ENCODE measurements at regions of chr3 and their contacts with region 1.

Region 1: GRCh38 chr3:52339612-52340011 is 23.5 kb downstream of the DNAH1 start:
- DNase-seq: peak; percentile 42 to 81
- ATAC-seq: peak; percentile 43 to 54; a peak in 3 of 6 replicates
- H3K4me3 ChIP-seq: no peak overlapping the region
- H3K27ac ChIP-seq: no peak overlapping the region
- H3K4me1 ChIP-seq: no peaks in the 10 kb centered on the region
- CTCF ChIP-seq: peak; percentile 81
- EP300 ChIP-seq: no peak
- POLR2A ChIP-seq: no peak
- RAD21 ChIP-seq: peak; percentile 87 to 89

Region 2: GRCh38 chr3:51887620-51888019 is 452.0 kb before region 1 on chr3:
- CTCF ChIA-PET with region 1: no interaction called
- POLR2A ChIA-PET with region 1: no interaction called
- DNase-seq: no peak
- ATAC-seq: no peak
- H3K4me3 ChIP-seq: no peak overlapping the region
- H3K27ac ChIP-seq: no peak overlapping the region
- H3K4me1 ChIP-seq: no peaks in the 10 kb centered on the region
- CTCF ChIP-seq: no peak
- EP300 ChIP-seq: no peak
- POLR2A ChIP-seq: no peak
- RAD21 ChIP-seq: no peak

Region 3: DNA sequence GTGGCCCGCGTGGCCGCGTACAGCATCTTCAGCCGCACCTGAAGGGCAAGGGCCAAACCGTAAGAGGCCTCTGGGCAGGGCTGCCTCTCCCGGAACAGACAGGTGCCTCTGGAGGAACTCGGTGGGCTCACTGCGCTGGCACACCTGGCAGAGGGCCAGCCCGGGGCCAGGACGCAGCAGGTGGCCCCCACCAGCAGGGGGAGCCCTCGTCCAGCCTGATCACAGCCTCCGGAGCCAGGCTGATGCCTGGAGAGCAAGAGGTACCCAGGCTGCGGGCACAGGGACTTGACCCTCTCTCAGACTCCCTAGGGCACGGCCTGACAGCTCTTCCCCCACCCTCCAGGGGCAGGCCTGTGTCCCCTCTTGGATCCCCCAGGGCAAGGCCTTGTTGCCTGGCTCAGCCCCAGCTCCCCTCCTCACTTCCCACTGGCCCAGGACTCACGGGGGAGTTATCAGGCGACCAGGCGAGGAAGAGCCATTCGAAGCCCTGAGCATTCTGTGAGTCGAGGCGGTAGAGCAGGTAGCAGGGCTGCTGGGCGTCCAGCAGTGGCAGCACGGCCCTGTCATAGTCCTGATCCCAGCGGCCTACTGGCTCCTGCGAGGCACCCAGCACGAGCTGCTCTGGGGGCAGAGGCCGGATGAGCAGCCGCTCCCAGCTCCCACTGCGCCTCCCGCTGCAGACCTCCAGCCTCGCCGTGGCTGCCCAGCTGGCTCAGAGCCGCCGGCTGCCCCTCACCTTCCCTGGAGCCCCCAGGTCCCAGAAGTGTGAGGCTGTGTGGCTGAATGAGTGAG is 107.9 kb before region 1 on chr3:
- CTCF ChIA-PET with region 1: interaction called, 54 read pairs
- POLR2A ChIA-PET with region 1: no interaction called
- DNase-seq: peak; percentile 40 to 62
- ATAC-seq: peak; percentile 61 to 85; a peak in 5 of 6 replicates
- H3K4me3 ChIP-seq: no peak overlapping the region
- H3K27ac ChIP-seq: no peak overlapping the region
- H3K4me1 ChIP-seq: peaks cover 6% of the 10 kb centered on the region
- CTCF ChIP-seq: peak; percentile 70
- EP300 ChIP-seq: no peak
- POLR2A ChIP-seq: no peak
- RAD21 ChIP-seq: peak; percentile 59 to 63; a peak in 4 of 5 replicates

Region 4: GRCh38 chr3:52291508-52292181 is 48.0 kb before region 1 on chr3:
- CTCF ChIA-PET with region 1: interaction called, 311 read pairs
- POLR2A ChIA-PET with region 1: interaction called, 3 read pairs
- DNase-seq: no peak
- ATAC-seq: peak in 1 of 2 experiments; percentile 39; a peak in 3 of 6 replicates
- H3K4me3 ChIP-seq: no peak overlapping the region
- H3K27ac ChIP-seq: no peak overlapping the region
- H3K4me1 ChIP-seq: peaks cover 20% of the 10 kb centered on the region
- CTCF ChIP-seq: peak; percentile 63
- EP300 ChIP-seq: no peak
- POLR2A ChIP-seq: no peak
- RAD21 ChIP-seq: peak; percentile 79 to 82

Region 5: DNA sequence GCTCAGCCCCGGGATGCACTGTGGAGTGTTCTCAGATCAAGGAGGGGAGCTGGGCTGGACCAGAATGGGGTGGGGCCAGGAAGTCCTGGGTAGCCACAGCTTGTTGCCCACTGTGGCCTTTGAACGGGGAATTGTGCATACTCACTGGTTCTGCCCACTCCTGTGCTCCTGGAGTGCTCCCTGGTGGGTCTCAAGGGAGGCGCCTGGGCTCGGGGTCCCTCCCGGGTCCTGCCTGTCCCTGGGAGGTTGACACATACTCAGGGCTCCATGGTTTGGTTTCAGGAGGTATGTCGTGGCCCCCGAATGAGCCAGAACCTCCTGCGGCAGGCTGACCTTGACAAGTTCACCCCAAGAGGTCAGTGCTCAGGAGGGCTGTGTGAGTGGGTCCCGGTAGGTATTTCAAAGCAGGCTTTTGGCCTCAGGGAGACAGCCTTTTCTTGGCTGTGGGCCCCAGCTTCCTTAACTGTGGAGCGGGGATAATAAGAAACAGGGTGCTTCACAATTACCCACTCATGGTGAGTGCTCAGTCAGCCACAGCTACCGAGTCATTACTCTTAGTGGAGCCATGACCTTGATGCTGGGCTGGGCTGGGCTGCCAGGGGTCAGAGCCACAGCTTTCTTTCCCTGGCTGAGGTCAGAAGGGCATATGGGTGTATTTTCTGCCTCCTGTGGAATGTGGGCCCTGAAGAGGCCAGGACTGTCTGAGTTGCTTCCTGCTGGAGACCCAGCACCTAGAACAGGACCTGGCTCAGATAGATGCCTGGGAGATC is 15.9 kb before region 1 on chr3:
- CTCF ChIA-PET with region 1: interaction called, 56 read pairs
- POLR2A ChIA-PET with region 1: no interaction called
- DNase-seq: no peak
- ATAC-seq: peak in 1 of 2 experiments; percentile 42; a peak in 2 of 6 replicates
- H3K4me3 ChIP-seq: no peak overlapping the region
- H3K27ac ChIP-seq: peak overlapping the region in 1 of 2 experiments; percentile 18; a peak in 1 of 6 replicates
- H3K4me1 ChIP-seq: no peaks in the 10 kb centered on the region
- CTCF ChIP-seq: no peak
- EP300 ChIP-seq: no peak
- POLR2A ChIP-seq: no peak
- RAD21 ChIP-seq: no peak

Region 6: DNA sequence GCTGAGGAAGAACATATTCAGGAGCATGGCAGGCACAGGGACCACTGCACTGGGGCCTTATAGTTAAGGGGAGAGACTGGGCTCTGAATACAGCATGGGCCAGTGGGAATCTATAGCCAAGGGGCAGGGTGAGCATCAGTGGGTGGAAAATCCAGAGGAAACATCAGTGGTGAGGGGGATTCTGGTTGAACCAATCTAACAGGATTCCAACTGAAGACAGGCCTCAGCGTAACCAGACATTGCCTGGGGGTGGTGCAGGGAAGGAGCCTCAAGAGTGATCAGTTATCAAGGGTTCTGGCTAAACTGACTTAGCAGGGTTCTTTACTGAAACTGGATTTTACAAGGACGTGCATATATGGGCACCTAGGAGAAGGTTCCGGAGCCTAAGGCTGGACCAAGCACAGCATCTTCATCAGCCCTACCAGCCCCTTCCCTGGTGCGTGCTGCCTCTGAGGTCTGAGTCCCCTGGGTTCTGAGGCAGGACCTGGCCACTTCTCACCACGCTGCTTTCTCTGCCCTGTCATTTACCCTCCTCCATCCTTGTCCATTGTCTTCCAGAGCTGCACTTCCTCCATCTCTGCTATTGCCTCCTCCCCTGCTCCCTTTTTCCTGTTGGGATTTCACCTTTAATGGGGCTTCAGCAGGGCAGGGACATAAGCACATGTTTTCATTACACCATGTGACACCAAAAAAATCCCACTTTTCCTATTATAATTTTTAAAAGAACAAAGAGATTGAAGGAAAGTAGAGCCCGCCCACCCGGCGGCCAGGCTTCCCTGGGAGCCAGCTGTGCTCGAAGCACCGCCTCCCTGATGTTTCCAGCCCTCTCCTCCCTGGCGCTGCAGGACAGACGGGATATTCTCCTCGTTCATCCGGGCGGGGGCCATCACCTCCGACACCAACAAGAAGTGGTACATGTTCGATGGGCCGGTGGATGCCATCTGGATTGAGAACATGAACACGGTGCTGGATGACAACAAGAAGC is 28.6 kb after region 1 on chr3:
- CTCF ChIA-PET with region 1: interaction called, 10 read pairs
- POLR2A ChIA-PET with region 1: no interaction called
- DNase-seq: no peak
- ATAC-seq: no peak
- H3K4me3 ChIP-seq: no peak overlapping the region
- H3K27ac ChIP-seq: no peak overlapping the region
- H3K4me1 ChIP-seq: no peaks in the 10 kb centered on the region
- CTCF ChIP-seq: no peak
- EP300 ChIP-seq: no peak
- POLR2A ChIP-seq: no peak
- RAD21 ChIP-seq: no peak

Region 7: DNA sequence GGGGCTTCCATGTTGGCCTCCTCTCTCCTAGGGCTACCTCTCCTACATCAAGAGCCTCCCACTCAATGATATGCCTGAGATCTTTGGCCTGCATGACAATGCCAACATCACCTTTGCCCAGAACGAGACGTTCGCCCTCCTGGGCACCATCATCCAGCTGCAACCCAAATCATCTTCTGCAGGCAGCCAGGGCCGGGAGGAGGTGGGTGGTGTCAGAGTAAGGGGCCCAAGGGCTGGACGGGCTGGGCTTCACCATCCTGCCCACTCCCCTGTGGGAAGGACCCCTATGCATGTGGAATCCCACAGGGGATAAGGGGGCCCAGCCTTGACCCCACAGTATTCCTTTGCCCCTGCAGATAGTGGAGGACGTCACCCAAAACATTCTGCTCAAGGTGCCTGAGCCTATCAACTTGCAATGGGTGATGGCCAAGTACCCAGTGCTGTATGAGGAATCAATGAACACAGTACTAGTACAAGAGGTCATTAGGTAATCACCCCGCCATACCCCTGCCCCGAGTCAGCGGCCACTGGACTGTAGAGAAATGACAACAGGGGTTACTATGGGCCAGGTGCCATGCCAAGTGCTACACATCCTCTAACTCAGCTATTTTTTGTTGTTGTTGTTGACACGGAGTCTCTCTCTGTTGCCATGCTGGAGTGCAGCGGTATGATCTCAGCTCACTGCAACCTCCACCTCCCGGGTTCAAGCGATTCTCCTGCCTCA is 58.2 kb after region 1 on chr3:
- CTCF ChIA-PET with region 1: no interaction called
- POLR2A ChIA-PET with region 1: no interaction called
- DNase-seq: no peak
- ATAC-seq: no peak; a peak in 1 of 6 replicates
- H3K4me3 ChIP-seq: no peak overlapping the region
- H3K27ac ChIP-seq: no peak overlapping the region
- H3K4me1 ChIP-seq: no peaks in the 10 kb centered on the region
- CTCF ChIP-seq: no peak
- EP300 ChIP-seq: no peak
- POLR2A ChIP-seq: no peak
- RAD21 ChIP-seq: no peak